ENCODE measurements at regions of chr10 and their contacts with region 1.

Region 1: GRCh38 chr10:63105225-63106110 is 27.7 kb upstream of the NRBF2 start:
- DNase-seq: no peak
- H3K4me3 ChIP-seq: no peak overlapping the region
- H3K27ac ChIP-seq: no peak overlapping the region
- H3K4me1 ChIP-seq: peaks cover 0 to 10% (median under 1%) of the 10 kb centered on the region in 4 experiments; a peak in 5 of 7 replicates
- H3K27me3 ChIP-seq: no peaks in the 10 kb centered on the region
- CTCF ChIP-seq: no peak
- EP300 ChIP-seq: no peak
- POLR2A ChIP-seq: no peak
- RAD21 ChIP-seq: no peak

Region 2: GRCh38 chr10:63083904-63084689 is 21.4 kb before region 1 on chr10:
- CTCF ChIA-PET with region 1: interaction called, 10 read pairs
- POLR2A ChIA-PET with region 1: no interaction called
- DNase-seq: peak in 1 of 2 experiments; percentile 19
- H3K4me3 ChIP-seq: no peak overlapping the region
- H3K27ac ChIP-seq: no peak overlapping the region
- H3K4me1 ChIP-seq: no peaks in the 10 kb centered on the region
- H3K27me3 ChIP-seq: no peaks in the 10 kb centered on the region
- CTCF ChIP-seq: peak in 2 of 3 experiments; percentile 74 to 75; a peak in 3 of 4 replicates
- EP300 ChIP-seq: no peak
- POLR2A ChIP-seq: no peak
- RAD21 ChIP-seq: peak; percentile 92 to 94